Panc1 (cell line): ENCODE measurements at regions of chr7 and their contacts with region 1.

Region 1: DNA sequence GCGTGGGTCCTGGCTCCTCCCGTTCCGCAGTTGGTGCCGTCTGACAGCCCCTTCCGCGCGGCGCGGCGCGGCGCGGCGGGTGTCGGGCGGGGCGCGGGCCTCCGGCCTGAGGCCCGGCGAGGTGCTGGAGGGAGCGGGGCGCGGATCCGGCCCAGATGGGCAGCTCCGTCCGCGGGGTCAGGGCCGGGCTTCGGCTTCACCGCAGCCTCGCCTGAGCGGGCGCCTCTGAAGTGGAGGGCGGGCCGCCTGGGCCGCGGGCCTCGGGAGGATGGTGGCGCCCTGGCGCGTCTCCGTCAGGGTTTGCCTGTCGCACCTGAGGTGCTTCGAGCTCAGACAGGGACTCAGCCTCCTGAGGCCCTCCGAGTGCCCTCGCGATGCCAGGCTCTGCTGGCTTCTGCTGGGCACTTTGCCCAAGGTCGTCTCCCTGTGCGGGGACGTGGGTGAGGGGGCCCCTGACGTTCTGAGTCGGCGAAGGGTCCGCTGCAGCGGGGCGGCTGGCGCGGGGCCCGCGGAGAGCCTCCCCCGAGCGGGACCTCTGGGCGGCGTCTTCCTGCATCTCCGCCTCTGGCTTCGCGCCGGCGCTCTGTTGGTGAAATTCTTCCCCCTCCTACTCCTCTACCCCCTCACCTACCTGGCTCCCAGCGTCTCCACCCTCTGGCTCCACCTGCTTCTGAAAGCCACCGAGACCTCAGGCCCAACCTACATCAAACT is 473 bp downstream of the ADCK2 start:
- DNase-seq: no peak
- ATAC-seq: peak; percentile 85
- H3K4me3 ChIP-seq: peak overlapping the region; percentile 64 to 78
- H3K27ac ChIP-seq: peak overlapping the region; percentile 34
- H3K4me1 ChIP-seq: no peaks in the 10 kb centered on the region; the same call in 1 of the 2 replicates
- H3K27me3 ChIP-seq: no peaks in the 10 kb centered on the region
- CTCF ChIP-seq: peak; percentile 14; the same call in 1 of the 2 replicates

Region 2: GRCh38 chr7:140596519-140597427 is 76.4 kb before region 1 on chr7:
- CTCF ChIA-PET with region 1: no interaction called
- POLR2A ChIA-PET with region 1: no interaction called
- in situ Hi-C with region 1: no loop called
- intact Hi-C with region 1: no loop called
- DNase-seq: no peak
- ATAC-seq: no peak
- H3K4me3 ChIP-seq: no peak overlapping the region
- H3K27ac ChIP-seq: no peak overlapping the region
- H3K4me1 ChIP-seq: no peaks in the 10 kb centered on the region
- H3K27me3 ChIP-seq: no peaks in the 10 kb centered on the region
- CTCF ChIP-seq: no peak

Region 3: GRCh38 chr7:140661121-140661520 is 12.1 kb before region 1 on chr7:
- CTCF ChIA-PET with region 1: interaction called, 15 read pairs
- POLR2A ChIA-PET with region 1: no interaction called
- in situ Hi-C with region 1: no loop called
- intact Hi-C with region 1: no loop called
- DNase-seq: no peak
- ATAC-seq: peak; percentile 75; the same call in 1 of the 2 replicates
- H3K4me3 ChIP-seq: no peak overlapping the region
- H3K27ac ChIP-seq: no peak overlapping the region
- H3K4me1 ChIP-seq: no peaks in the 10 kb centered on the region
- H3K27me3 ChIP-seq: no peaks in the 10 kb centered on the region; the same call in 1 of the 2 replicates
- CTCF ChIP-seq: peak; percentile 43

Region 4: DNA sequence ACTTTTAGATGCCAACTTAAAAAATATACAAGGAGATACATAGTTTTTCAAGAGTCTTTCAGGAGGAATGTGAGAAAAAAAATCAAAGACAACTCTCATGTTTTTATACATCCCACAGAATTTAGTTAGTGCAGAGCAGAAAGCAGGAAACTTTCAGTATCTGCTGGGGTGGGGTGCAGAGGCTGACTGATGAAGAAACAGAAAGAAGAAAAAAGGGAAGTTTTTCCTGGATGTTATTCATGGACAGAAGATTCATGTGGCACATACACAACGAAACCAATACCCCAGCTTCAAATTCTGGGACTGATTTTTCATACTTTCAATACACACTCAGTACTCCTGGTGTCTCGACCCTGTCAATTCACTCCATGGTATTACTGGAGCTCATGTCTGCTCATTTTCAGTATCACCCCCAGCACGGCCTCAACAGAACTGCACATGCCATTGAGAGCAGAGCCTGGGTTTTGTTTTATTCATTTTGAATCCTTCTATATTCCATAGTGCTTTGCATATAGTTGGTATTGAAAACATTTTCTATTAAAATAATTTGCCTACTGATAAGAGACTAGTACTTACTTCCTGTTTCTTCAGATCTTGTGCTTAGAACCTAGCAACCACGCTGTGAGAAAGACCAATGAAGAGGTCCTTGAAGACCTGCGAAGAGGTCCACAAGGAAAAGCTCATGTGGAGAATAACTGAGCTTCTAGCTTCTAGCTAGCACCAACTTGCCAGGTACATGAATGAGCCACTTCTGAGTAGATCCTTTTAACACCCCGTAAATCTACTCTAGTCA is 72.2 kb after region 1 on chr7:
- CTCF ChIA-PET with region 1: no interaction called
- POLR2A ChIA-PET with region 1: no interaction called
- in situ Hi-C with region 1: no loop called
- intact Hi-C with region 1: no loop called
- DNase-seq: no peak
- ATAC-seq: no peak
- H3K4me3 ChIP-seq: no peak overlapping the region
- H3K27ac ChIP-seq: no peak overlapping the region
- H3K4me1 ChIP-seq: no peaks in the 10 kb centered on the region
- H3K27me3 ChIP-seq: no peaks in the 10 kb centered on the region
- CTCF ChIP-seq: no peak

Region 5: DNA sequence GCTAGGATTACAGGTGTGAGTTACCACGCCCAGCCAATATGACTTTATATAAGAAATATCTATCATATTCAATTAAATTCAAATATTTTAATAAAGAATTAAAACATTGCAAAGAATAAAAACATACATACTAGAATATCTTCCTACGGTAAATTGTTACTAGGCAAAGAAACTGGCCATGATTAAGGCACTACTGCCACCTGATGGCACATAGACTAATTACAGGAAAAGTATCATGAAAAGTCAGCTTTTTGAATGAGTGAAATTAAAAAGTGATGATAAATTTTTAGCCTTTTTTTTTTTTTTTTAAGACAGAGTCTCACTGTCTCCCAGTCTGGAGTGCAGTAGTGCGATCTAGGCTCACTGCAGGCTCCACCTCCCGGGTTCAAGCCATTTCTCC is 310.6 kb after region 1 on chr7:
- CTCF ChIA-PET with region 1: interaction called, 4 read pairs
- POLR2A ChIA-PET with region 1: no interaction called
- in situ Hi-C with region 1: no loop called
- intact Hi-C with region 1: loop called (anchors 10 kb)
- DNase-seq: no peak
- ATAC-seq: no peak
- H3K4me3 ChIP-seq: no peak overlapping the region
- H3K27ac ChIP-seq: no peak overlapping the region
- H3K4me1 ChIP-seq: no peaks in the 10 kb centered on the region
- H3K27me3 ChIP-seq: no peaks in the 10 kb centered on the region
- CTCF ChIP-seq: peak; percentile 66